HEK293 (cell line): ENCODE measurements at regions of chr20 and their contacts with region 1.

Region 1: GRCh38 chr20:50165684-50166554 is 12.4 kb upstream of the PEDS1 start:
- H3K4me3 ChIP-seq: peak overlapping the region; percentile 22
- H3K27ac ChIP-seq: peak overlapping the region; percentile 13; the same call in 1 of the 2 replicates
- H3K4me1 ChIP-seq: no peaks in the 10 kb centered on the region
- CTCF ChIP-seq: peak; percentile 11; the same call in 1 of the 2 replicates

Region 2: GRCh38 chr20:49724408-49725223 is 441.3 kb before region 1 on chr20:
- CTCF ChIA-PET with region 1: no interaction called
- POLR2A ChIA-PET with region 1: no interaction called
- H3K4me3 ChIP-seq: no peak overlapping the region
- H3K27ac ChIP-seq: no peak overlapping the region
- H3K4me1 ChIP-seq: no peaks in the 10 kb centered on the region
- CTCF ChIP-seq: no peak

Region 3: GRCh38 chr20:49945701-49946477 is 220.0 kb before region 1 on chr20:
- CTCF ChIA-PET with region 1: no interaction called
- POLR2A ChIA-PET with region 1: no interaction called
- H3K4me3 ChIP-seq: no peak overlapping the region
- H3K27ac ChIP-seq: no peak overlapping the region
- H3K4me1 ChIP-seq: no peaks in the 10 kb centered on the region
- CTCF ChIP-seq: no peak

Region 4: DNA sequence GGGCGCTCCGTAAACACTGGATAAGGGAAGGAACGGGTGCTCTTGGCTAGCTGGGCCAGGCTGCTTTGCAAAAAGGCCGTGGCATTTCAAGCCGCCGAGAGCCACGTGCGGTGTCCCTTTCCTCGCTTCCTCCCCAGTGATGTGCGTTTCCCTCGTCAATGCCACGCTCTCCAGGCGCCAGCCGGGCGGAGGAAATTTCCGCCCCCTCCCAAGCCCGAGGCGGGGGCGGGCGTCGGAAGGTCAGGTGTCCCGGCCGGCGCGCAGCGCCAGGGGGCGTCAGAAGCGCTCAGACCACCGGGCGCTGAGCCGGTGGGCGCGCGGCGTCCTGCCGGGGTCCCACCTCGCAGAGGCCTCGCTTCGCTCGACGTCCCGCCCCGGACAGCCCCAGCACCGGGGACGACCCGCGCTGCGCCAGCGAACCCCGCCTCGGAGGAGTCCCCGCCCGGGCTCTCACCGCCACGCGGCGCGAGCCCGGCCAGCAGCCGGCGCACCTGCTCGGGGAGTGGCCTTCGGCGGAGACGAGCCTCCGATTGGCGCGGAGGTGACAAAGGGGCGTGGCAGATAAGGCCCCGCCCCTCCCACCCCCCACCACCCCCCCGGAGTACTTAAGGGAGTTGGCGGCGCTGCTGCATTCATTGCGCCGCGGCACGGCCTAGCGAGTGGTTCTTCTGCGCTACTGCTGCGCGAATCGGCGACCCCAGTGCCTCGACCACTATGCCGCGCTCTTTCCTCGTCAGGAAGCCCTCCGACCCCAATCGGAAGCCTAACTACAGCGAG is 183.4 kb before region 1 on chr20 and contains the start of gene SNAI1:
- CTCF ChIA-PET with region 1: interaction called, 17 read pairs
- POLR2A ChIA-PET with region 1: no interaction called
- H3K4me3 ChIP-seq: peak within 1 kb of the TSS; percentile 35
- H3K27ac ChIP-seq: no peak within 1 kb of the TSS; the same call in 1 of the 2 replicates
- H3K4me1 ChIP-seq: peaks cover 2% of the 10 kb centered on the region; the same call in 1 of the 2 replicates
- CTCF ChIP-seq: peak; percentile 67

Region 5: GRCh38 chr20:50085452-50086365 is 80.2 kb before region 1 on chr20:
- CTCF ChIA-PET with region 1: interaction called, 12 read pairs
- POLR2A ChIA-PET with region 1: no interaction called
- H3K4me3 ChIP-seq: no peak overlapping the region
- H3K27ac ChIP-seq: no peak overlapping the region
- H3K4me1 ChIP-seq: peaks cover 8% of the 10 kb centered on the region
- CTCF ChIP-seq: peak; percentile 79

Region 6: GRCh38 chr20:50115591-50116372 is 50.1 kb before region 1 on chr20:
- CTCF ChIA-PET with region 1: interaction called, 94 read pairs
- POLR2A ChIA-PET with region 1: interaction called, 9 read pairs
- H3K4me3 ChIP-seq: peak overlapping the region; percentile 59
- H3K27ac ChIP-seq: no peak overlapping the region; the same call in 1 of the 2 replicates
- H3K4me1 ChIP-seq: peaks cover 5% of the 10 kb centered on the region; the same call in 1 of the 2 replicates
- CTCF ChIP-seq: no peak

Region 7: GRCh38 chr20:50120897-50121693 is 44.8 kb before region 1 on chr20:
- CTCF ChIA-PET with region 1: interaction called, 94 read pairs
- POLR2A ChIA-PET with region 1: interaction called, 9 read pairs
- H3K4me3 ChIP-seq: no peak overlapping the region
- H3K27ac ChIP-seq: no peak overlapping the region
- H3K4me1 ChIP-seq: no peaks in the 10 kb centered on the region
- CTCF ChIP-seq: peak; percentile 84

Region 8: GRCh38 chr20:50153485-50154377 is 12.2 kb before region 1 on chr20 and contains the start of gene PEDS1:
- CTCF ChIA-PET with region 1: interaction called, 44 read pairs
- POLR2A ChIA-PET with region 1: interaction called, 24 read pairs
- H3K4me3 ChIP-seq: peak within 1 kb of the TSS; percentile 83
- H3K27ac ChIP-seq: peak within 1 kb of the TSS; percentile 83
- H3K4me1 ChIP-seq: peaks cover 4% of the 10 kb centered on the region; the same call in 1 of the 2 replicates
- CTCF ChIP-seq: peak; percentile 45

Region 9: GRCh38 chr20:50179507-50180016 is 13.6 kb after region 1 on chr20:
- CTCF ChIA-PET with region 1: interaction called, 27 read pairs
- POLR2A ChIA-PET with region 1: no interaction called
- H3K4me3 ChIP-seq: no peak overlapping the region
- H3K27ac ChIP-seq: no peak overlapping the region
- H3K4me1 ChIP-seq: no peaks in the 10 kb centered on the region
- CTCF ChIP-seq: no peak

Region 10: DNA sequence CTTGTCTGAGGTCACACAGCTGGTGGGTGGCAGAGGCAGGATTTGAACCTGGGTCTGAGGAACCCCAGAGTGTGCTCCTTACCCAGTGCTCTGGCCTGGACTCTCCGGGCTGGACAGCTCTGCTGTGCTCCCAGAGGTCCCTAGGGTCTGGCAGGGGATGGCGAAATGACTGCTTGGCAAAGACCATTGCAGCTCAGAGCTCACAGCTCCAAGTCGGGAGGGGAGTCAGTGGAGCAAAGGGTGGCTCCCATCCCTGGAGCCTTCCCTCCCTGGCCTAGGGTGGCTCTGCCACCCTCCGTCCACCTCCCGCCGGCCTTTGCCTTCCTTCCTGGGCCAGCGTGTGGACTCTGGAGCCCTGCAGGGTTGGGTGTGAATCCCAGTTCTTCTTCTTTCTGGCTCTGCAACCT is 42.2 kb after region 1 on chr20:
- CTCF ChIA-PET with region 1: no interaction called
- POLR2A ChIA-PET with region 1: no interaction called
- H3K4me3 ChIP-seq: no peak overlapping the region
- H3K27ac ChIP-seq: no peak overlapping the region
- H3K4me1 ChIP-seq: no peaks in the 10 kb centered on the region
- CTCF ChIP-seq: no peak

Region 11: DNA sequence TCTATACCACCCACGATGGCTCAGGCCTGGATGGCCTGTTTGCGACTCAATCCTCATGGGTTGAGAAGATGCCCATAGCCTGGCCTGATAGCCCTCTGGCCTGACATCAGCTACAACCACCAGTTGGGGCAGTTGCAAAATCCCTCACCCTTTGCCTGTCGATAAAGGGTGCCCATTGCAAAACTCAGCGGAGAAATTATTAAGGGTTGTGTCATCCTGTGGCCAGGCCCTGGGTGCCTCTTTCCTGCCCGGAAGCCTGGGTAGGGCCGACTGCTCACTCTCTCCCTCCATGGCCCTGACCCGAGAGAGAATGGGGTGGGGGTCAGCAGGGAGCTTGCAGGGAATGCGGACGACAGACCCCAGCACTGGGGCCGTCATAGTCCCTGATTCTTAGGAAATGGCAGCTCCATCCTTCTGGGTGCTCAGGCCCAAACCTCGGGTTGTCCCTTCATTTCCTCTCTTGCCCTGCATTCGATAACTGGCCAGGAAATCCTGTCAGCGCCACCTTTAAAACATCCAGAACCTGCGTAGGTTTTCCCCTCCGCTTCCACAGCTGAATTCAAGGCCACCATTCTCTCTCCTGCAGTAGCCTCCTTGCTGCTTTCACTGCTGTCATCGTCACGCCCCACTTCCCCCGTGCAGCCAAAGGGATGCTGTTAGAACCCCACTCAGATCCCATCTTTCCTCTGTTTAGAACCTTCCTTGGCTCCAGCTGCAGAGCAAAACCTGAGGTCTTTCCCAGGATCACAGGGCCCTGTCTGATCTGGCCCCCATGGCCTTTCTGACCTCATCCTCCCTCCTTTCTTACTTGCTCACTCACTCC is 55.8 kb after region 1 on chr20:
- CTCF ChIA-PET with region 1: no interaction called
- POLR2A ChIA-PET with region 1: no interaction called
- H3K4me3 ChIP-seq: no peak overlapping the region
- H3K27ac ChIP-seq: no peak overlapping the region
- H3K4me1 ChIP-seq: no peaks in the 10 kb centered on the region
- CTCF ChIP-seq: no peak